ENCODE measurements at regions of chr12 and their contacts with region 1.

Region 1: DNA sequence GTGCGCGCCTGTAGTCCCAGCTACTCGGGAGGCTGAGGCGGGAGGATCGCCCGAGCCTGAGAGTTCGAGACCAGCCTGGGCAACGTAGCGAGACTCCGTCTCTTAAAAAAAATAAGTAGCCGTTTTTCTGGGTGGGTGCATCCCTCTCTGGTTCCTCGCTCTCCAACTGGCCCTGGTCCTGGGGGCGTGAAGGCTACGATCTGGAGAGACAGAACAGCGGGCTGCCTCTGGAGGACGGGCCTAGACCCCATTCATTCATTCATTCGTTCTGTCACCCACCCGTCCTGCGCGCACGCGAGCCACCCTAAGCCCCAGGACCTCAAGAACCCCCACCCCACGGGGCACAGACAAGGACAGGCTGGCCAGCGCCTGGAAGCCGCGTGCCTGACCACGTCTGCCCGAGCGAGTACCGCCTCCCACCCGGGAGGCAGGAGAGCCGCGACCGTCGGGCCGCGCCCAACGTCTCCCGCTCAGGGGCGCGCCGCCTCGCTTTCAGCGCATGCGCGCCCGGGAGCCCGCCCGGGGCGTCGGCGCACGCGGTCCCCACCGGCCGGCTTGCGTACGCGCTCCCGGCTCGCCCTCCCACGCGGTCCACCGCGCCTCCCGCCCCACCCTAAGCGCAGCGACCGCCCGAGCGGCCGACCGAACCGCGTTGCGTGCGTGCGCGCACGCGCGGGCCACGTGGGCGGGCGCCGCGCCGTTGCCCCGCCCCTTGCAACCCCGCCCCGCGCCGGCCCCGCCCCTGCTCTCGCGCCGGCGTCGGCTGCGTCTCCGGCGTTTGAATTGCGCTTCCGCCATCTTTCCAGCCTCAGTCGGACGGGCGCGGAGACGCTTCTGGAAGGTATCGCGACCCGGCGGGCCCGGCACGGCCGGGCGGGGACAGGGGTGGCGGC is at the start of gene RAN:
- DNase-seq: peak; percentile 96
- H3K4me3 ChIP-seq: peak within 1 kb of the TSS; percentile 55 to 99 (median 98)
- H3K27ac ChIP-seq: peak within 1 kb of the TSS; percentile 92 to 97 (median 94)
- H3K4me1 ChIP-seq: peaks cover 2 to 33% (median 26%) of the 10 kb centered on the region in 4 donors
- H3K27me3 ChIP-seq: no peaks in the 10 kb centered on the region
- CTCF ChIP-seq: peak in 1 of 4 experiments; percentile 7
- EP300 ChIP-seq: no peak
- POLR2A ChIP-seq: no peak
- total RNA-seq, gene RAN: 160 to 186 (median 180) TPM

Region 2: GRCh38 chr12:130838951-130839769 is 32.4 kb before region 1 on chr12 and contains the start of gene STX2:
- intact Hi-C with region 1: loop called (anchors 1 kb)
- DNase-seq: peak; percentile 93
- H3K4me3 ChIP-seq: peak within 1 kb of the TSS; percentile 87 to 100 (median 94)
- H3K27ac ChIP-seq: peak within 1 kb of the TSS; percentile 82 to 90 (median 83)
- H3K4me1 ChIP-seq: peaks cover 0 to 24% (median 14%) of the 10 kb centered on the region in 4 donors
- H3K27me3 ChIP-seq: no peaks in the 10 kb centered on the region
- CTCF ChIP-seq: no peak
- EP300 ChIP-seq: no peak
- POLR2A ChIP-seq: no peak
- total RNA-seq, gene STX2: 39.2 to 61.2 (median 44.2) TPM

Region 3: DNA sequence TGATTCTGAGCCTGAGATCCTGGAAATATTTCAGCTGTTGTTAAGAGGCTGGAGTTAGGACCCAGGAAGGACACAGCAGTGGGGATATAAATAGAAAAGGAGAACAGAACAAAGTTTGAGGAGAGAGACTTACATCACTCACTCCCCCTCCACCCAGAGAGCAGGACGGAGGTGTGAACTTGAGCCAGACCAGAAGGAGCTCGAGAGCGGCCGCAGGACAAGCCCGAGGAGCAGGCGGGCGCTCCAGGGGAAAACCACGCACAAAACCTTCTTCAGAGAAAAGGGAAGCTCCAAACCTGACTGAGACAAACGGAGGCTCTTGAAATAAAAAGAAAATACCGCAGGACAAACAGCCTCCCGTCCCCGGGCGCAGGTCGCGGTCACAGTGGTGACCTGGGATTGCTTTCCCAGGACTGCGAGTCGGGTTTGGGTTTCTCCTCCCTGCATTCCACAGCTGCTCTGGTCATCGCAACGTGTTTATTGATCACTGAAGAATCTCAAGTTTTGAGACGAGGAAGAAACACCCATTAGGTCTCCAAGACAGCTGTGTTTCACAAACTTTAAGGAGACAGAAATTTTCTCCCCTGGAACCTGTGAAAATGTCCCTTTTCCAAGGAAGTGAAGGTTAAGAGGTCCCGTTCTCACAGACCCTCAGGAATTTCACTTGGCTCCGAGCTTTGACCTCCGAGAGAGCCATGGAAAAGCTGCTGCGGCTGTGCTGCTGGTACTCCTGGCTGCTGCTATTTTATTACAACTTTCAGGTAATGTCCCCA is 82.4 kb after region 1 on chr12 and contains the start of gene ADGRD1:
- intact Hi-C with region 1: loop called (anchors 5 kb)
- DNase-seq: peak; percentile 93
- H3K4me3 ChIP-seq: peak within 1 kb of the TSS; percentile 32 to 53 (median 44)
- H3K27ac ChIP-seq: peak within 1 kb of the TSS; percentile 66 to 80 (median 70)
- H3K4me1 ChIP-seq: peaks cover 0 to 42% (median 32%) of the 10 kb centered on the region in 4 donors
- H3K27me3 ChIP-seq: no peaks in the 10 kb centered on the region
- CTCF ChIP-seq: no peak
- EP300 ChIP-seq: no peak
- POLR2A ChIP-seq: peak; percentile 28 to 44
- total RNA-seq, gene ADGRD1: 7.2 to 22.5 (median 14.2) TPM

Region 4: GRCh38 chr12:131287938-131288764 is 416.6 kb after region 1 on chr12:
- intact Hi-C with region 1: no loop called
- DNase-seq: peak; percentile 34
- H3K4me3 ChIP-seq: no peak overlapping the region
- H3K27ac ChIP-seq: no peak overlapping the region
- H3K4me1 ChIP-seq: no peaks in the 10 kb centered on the region
- H3K27me3 ChIP-seq: peaks cover 0 to 9% (median 0%) of the 10 kb centered on the region in 3 donors
- CTCF ChIP-seq: no peak
- EP300 ChIP-seq: no peak
- POLR2A ChIP-seq: no peak

Measured in sigmoid colon (tissue), 7 donors.